PC-3 (cell line): ENCODE measurements at regions of chr11 and their contacts with region 1.

Region 1: GRCh38 chr11:83292709-83293456 is 6.7 kb upstream of the CCDC90B start:
- DNase-seq: peak; percentile 84
- ATAC-seq: peak; percentile 96
- H3K4me3 ChIP-seq: peak overlapping the region; percentile 54; the same call in 1 of the 2 replicates
- H3K27ac ChIP-seq: no peak overlapping the region
- H3K4me1 ChIP-seq: 0 out of 2 replicates have a peak, but pooled peaks cover 4% of the 10 kb centered on the region
- H3K27me3 ChIP-seq: no peaks in the 10 kb centered on the region
- CTCF ChIP-seq: peak; percentile 91

Region 2: GRCh38 chr11:83671289-83671688 is 378.4 kb after region 1 on chr11:
- CTCF ChIA-PET with region 1: interaction called, 10 read pairs
- POLR2A ChIA-PET with region 1: no interaction called
- intact Hi-C with region 1: loop called (anchors 1 kb)
- DNase-seq: peak; percentile 17
- ATAC-seq: no peak
- H3K4me3 ChIP-seq: no peak overlapping the region
- H3K27ac ChIP-seq: no peak overlapping the region
- H3K4me1 ChIP-seq: no peaks in the 10 kb centered on the region
- H3K27me3 ChIP-seq: peaks cover 16% of the 10 kb centered on the region
- CTCF ChIP-seq: no peak; the same call in 1 of the 2 replicates

Region 3: DNA sequence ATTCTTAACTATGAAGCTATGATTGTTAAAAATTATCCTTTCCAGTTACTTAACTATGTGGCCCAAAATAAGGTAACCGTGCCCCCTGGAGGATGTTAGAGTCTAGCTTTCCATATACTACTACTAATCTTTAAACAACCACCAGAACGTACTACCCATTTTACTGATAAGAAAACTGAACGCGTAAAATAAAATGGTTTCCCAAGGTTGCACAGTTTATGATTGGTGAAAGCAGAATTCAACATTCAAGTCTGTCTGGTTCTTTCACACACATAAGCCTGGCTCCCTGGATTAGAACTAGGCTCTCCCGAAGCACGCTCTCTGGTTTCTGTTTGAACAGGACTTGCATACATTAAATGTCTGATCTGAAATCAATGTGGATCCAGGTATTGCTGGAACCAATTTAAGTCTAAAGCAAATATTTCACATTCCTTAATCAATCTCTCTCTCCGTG is 431.2 kb after region 1 on chr11:
- CTCF ChIA-PET with region 1: interaction called, 15 read pairs
- POLR2A ChIA-PET with region 1: no interaction called
- intact Hi-C with region 1: loop called (anchors 1 kb)
- DNase-seq: peak; percentile 58
- ATAC-seq: peak; percentile 70
- H3K4me3 ChIP-seq: peak overlapping the region; percentile 68
- H3K27ac ChIP-seq: no peak overlapping the region
- H3K4me1 ChIP-seq: no peaks in the 10 kb centered on the region
- H3K27me3 ChIP-seq: peaks cover 8% of the 10 kb centered on the region; the same call in 1 of the 2 replicates
- CTCF ChIP-seq: peak; percentile 73